ENCODE measurements at regions of chr12 and their contacts with region 1.

Region 1: DNA sequence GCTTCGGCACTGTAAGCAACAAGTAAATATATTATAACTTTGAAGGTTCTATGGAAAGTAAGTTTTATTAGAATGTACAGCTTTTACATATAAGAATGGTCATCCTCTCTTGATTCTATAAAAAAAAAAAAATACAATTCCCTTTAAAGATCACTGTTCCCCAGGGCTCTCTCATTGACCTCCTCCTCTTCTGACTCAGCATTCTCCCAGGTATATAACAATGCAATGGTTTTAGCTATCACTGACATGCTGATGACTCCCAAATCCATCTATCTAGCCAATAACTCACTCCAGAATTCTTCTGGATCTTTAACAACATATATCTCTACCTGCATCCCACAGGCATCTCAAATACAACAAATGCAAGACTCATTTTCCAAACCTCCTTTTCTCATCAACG is 62.7 kb downstream of the EEA1 start:
- DNase-seq: no peak
- ATAC-seq: no peak
- H3K4me3 ChIP-seq: no peak overlapping the region
- H3K27ac ChIP-seq: no peak overlapping the region
- H3K4me1 ChIP-seq: peaks cover 41 to 45% of the 10 kb centered on the region in 2 donors
- H3K27me3 ChIP-seq: no peaks in the 10 kb centered on the region
- CTCF ChIP-seq: no peak
- POLR2A ChIP-seq: no peak

Region 2: DNA sequence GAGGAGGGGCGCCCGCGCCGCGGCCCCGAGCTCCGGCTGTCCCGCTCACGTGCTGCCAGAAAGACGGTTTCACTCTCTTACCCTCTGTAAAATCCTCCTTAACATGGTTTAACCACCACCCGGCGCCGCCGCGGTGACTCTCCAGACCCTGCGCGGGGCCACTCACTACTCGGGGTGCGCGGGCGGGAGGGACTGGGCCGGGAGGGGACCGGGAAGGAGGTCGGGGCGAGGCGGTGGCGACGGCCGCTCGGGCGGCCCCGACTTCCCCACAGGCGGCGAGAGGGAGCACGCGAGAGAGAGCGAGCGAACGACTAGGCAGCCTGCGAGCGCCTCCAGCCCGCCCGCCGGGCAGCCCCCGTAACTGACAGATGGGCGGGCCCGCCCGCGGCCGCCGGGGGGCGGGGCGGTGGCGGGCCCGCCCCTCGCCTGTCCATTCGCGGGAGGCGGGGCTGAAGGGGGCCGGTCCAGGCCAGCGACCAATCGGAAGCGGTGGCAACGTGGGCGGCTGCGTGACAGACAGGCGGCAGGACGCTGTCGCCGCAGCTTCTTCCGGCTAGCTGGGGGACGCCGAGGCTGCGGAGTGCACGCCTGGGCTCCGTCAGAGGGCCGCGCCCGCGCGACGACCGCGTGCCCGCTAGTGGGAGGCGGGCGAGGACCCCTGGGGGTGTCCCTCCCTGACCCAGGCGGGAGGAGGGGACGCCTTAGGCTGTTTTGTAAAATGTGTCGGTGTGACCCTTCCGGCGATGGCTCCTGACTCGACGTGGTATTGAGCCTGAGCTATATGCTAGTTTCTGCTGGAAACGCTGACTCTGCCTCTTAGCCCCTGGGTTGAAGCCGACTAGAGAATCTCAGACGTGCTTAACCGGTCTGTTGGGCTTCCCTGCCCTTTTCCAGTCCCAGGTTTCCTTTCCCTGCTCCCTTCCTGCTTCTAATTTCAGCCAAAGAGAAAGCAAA is 62.8 kb after region 1 on chr12 and contains the start of gene EEA1:
- in situ Hi-C with region 1: no loop called
- intact Hi-C with region 1: loop called (anchors 5 kb)
- DNase-seq: peak; percentile 96 to 97
- ATAC-seq: peak; percentile 83 to 84
- H3K4me3 ChIP-seq: peak within 1 kb of the TSS; percentile 69 to 92 (median 86)
- H3K27ac ChIP-seq: peak within 1 kb of the TSS; percentile 94 to 100 (median 99)
- H3K4me1 ChIP-seq: peaks cover 39 to 41% of the 10 kb centered on the region in 2 donors
- H3K27me3 ChIP-seq: no peaks in the 10 kb centered on the region
- CTCF ChIP-seq: peak in 4 of 5 experiments; percentile 11 to 45 (median 40)
- POLR2A ChIP-seq: peak; percentile 94 to 97
- total RNA-seq, gene EEA1: 18.6 to 28.7 (median 20.8) TPM

Region 3: GRCh38 chr12:93302331-93303229 is 436.2 kb after region 1 on chr12:
- in situ Hi-C with region 1: no loop called
- intact Hi-C with region 1: no loop called
- DNase-seq: peak in 1 of 2 donors; percentile 20
- ATAC-seq: peak; percentile 82 to 84
- H3K4me3 ChIP-seq: no peak overlapping the region
- H3K27ac ChIP-seq: peak overlapping the region; percentile 49 to 67 (median 64)
- H3K4me1 ChIP-seq: peaks cover 20 to 33% of the 10 kb centered on the region in 2 donors
- H3K27me3 ChIP-seq: no peaks in the 10 kb centered on the region
- CTCF ChIP-seq: no peak
- POLR2A ChIP-seq: no peak

Measured in gastrocnemius medialis (tissue), 4 donors.